ENCODE measurements at regions of chr1 and their contacts with region 1.

Region 1: DNA sequence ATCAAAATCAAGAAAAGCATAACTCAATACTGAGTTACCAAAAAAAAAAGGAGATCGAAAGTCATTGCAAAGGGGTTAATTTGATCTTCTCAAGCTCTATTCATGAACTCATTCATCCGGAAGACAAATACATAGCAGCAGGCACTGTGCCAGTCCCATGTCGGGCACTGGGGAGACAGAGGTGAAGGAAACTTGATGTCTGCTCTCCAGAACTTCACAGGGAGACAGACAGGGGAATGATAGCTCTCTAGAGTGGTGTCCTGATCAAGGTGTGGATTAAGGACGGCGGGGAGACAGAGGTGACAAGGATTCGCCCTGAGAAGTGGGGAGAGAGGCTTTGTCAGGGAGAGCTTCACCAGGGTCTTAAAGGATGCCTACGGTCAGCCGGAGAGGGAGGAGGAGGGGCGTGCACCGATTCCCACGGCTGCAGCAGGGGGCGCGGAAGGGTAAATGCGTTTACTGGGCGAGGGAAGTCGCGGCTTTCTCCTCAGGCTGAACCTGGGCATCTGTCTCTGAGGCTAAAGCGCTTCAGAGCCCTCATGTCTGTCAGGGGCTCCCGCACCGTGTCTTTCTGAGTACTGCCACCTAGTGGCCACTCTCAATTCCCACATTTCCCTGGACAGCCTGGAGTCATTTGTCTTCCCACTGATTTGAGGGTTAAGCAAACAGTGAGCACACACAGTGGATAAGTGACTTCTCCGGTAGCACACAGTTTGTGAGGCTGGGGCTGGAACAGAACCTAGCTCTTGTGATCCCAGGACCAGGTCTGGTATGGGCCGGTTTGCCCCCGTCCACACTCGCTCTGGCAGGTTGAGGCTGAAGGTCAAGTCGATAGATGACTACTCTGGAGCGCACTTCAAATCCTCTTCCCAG is 152.8 kb downstream of the TENT5C start:
- DNase-seq: peak; percentile 48
- H3K4me3 ChIP-seq: peak overlapping the region; percentile 59
- H3K27ac ChIP-seq: no peak overlapping the region
- H3K4me1 ChIP-seq: peaks cover 10% of the 10 kb centered on the region
- H3K27me3 ChIP-seq: no peaks in the 10 kb centered on the region
- CTCF ChIP-seq: peak; percentile 89

Region 2: GRCh38 chr1:117534995-117535467 is 223.6 kb before region 1 on chr1:
- intact Hi-C with region 1: loop called (anchors 5 kb)
- DNase-seq: no peak
- H3K4me3 ChIP-seq: no peak overlapping the region
- H3K27ac ChIP-seq: no peak overlapping the region
- H3K4me1 ChIP-seq: no peaks in the 10 kb centered on the region
- H3K27me3 ChIP-seq: no peaks in the 10 kb centered on the region
- CTCF ChIP-seq: peak; percentile 75

Region 3: DNA sequence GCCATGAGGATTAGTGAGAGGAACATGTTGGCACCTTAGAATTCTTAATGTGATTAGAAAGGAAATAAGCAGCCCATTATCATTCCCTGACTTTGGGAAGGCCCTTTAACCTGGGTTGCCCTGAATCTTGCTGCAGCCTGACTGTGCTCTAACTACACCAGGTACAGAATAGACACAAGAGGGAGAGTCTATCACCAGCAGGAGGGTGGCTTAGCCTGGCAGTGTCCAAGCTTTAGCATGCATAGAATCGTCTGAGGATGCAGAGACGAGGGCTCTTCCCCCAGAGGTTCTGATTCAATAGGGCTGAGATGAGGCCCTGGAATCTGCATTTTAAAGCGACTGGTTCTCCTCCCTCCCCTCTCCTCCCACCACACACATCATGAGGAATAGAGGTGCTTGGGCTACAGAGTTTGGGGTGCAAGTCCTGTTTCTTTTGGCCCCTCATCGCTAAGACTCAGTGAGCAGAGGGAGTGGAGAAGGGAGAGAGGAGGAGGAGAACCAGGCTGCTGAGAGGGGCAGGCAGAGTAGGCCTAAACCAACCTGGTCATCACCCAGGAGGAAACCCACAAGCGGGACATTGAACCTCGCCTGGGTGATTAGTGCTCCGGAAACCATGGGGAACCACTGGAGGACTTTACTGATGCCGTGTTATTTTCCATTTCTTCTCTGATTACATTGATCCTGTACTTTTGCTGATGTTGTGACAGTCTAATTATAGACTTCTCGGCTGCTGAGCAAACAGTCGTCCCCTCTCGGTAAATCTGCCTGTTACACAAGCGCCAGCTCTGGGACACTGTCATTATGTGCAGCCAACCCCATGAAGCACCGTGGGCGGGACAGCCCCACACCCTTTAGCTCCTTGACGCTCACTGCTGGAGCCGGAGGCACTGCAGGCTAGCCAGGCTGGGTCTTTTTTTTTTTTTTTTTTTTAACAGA is 159.1 kb before region 1 on chr1:
- intact Hi-C with region 1: no loop called
- DNase-seq: peak; percentile 29
- H3K4me3 ChIP-seq: no peak overlapping the region
- H3K27ac ChIP-seq: no peak overlapping the region
- H3K4me1 ChIP-seq: peaks cover 3% of the 10 kb centered on the region
- H3K27me3 ChIP-seq: no peaks in the 10 kb centered on the region
- CTCF ChIP-seq: no peak